SK-N-SH (cell line): ENCODE measurements at regions of chr15 and their contacts with region 1.

Region 1: DNA sequence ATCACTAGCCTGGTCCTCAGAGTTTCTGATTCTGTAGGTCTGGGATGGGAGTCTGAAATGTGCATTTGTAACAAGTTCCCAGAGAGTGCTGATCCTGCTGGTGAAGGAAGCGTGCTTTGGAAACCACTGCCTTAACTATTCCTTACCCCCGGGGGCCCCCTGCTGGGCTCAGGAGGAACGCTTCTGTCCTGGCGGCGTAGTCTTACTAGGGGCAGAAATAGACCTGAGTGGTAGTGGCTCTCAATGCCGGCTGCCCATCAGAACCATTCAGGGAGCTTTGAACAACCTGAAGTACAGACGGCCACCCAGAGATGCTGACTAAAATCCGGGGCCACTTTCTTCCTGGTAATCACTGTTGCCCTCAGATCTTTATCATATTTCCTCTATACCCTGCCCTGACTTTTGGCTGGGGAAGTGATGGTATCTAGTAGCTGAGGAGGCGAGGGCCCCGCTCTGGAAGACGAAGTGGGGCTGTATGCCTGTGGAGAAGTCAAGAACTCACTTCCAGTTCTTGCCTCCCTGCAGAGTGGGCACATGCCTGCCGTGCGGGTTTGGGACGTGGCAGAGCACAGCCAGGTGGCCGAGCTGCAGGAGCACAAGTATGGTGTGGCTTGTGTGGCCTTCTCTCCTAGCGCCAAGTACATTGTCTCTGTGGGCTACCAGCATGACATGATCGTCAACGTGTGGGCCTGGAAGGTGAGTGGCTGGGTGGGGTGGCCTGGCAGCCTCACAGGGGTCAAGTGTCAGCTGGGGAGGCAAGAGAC is 16.3 kb upstream of the JMJD7 start:
- DNase-seq: peak; percentile 89
- H3K4me3 ChIP-seq: no peak overlapping the region; a peak in 1 of 4 replicates
- H3K27ac ChIP-seq: no peak overlapping the region
- H3K4me1 ChIP-seq: peaks cover 0 to 2% of the 10 kb centered on the region in 2 experiments; a peak in 1 of 4 replicates
- H3K27me3 ChIP-seq: no peaks in the 10 kb centered on the region
- CTCF ChIP-seq: peak; percentile 92
- EP300 ChIP-seq: no peak
- RAD21 ChIP-seq: peak; percentile 98

Region 2: DNA sequence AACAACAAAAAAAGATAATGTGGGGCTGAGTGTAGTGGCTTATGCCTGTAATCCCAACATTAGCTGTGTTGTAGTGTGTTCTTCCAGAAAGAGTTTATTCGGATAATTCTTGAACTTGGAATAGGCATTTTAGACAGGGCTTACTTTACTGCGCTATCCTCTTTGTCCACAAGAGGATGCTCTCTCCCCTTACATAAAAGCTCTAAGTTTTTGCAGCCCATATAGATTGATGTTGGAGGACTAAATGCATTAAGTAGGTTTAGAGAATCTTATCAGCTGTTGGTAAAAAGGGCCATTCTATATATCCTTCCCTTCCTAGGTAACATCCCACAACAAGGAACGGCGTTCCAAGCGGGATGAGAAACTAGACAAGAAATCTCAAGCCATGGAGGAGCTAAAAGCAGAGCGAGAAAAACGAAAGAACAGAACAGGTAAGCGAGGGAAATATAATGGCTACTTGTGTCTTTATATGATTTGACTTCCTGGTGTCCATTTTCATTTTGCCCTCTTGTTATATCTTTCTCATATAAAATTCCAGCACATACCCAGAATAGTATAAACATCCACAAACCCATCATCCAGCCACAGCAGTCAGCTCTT is 345.7 kb before region 1 on chr15:
- CTCF ChIA-PET with region 1: interaction called, 33 read pairs
- POLR2A ChIA-PET with region 1: no interaction called
- DNase-seq: peak; percentile 62
- H3K4me3 ChIP-seq: no peak overlapping the region
- H3K27ac ChIP-seq: no peak overlapping the region
- H3K4me1 ChIP-seq: no peaks in the 10 kb centered on the region
- H3K27me3 ChIP-seq: no peaks in the 10 kb centered on the region
- CTCF ChIP-seq: peak; percentile 97
- EP300 ChIP-seq: no peak
- RAD21 ChIP-seq: peak; percentile 92

Region 3: GRCh38 chr15:41597787-41598186 is 213.8 kb before region 1 on chr15:
- CTCF ChIA-PET with region 1: interaction called, 47 read pairs
- POLR2A ChIA-PET with region 1: no interaction called
- DNase-seq: no peak
- H3K4me3 ChIP-seq: no peak overlapping the region
- H3K27ac ChIP-seq: no peak overlapping the region
- H3K4me1 ChIP-seq: no peaks in the 10 kb centered on the region
- H3K27me3 ChIP-seq: no peaks in the 10 kb centered on the region; the same call in 1 of the 2 replicates
- CTCF ChIP-seq: no peak
- EP300 ChIP-seq: no peak
- RAD21 ChIP-seq: no peak

Region 4: DNA sequence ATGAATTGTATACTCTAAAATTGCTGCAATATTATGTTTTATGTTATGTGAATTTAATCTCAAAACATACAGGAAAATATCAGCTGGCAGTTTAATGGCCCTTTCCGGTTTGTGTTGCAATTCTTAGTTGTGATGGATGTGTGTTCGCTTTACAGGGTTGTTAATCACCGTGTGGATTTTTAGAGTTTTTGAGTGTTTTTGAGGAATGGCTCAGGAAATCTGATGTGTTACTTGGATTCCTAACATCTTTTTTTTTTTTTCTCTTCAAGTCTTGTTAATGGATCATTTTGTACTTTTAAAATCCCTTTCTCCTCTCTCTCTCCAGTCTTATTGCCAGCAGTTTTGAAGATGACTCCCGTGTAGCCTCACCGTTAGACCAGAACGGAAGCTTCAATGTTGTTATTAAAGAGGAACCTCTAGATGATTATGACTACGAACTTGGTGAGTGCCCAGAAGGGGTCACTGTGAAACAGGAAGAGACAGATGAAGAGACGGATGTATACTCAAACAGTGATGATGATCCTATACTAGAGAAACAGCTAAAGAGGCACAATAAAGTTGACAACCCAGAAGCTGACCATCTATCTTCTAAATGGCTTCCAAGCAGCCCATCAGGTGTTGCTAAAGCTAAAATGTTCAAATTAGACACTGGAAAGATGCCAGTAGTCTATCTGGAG is 115.7 kb before region 1 on chr15:
- CTCF ChIA-PET with region 1: interaction called, 20 read pairs
- POLR2A ChIA-PET with region 1: no interaction called
- DNase-seq: peak; percentile 48
- H3K4me3 ChIP-seq: no peak overlapping the region
- H3K27ac ChIP-seq: no peak overlapping the region
- H3K4me1 ChIP-seq: no peaks in the 10 kb centered on the region; a peak in 2 of 4 replicates
- H3K27me3 ChIP-seq: no peaks in the 10 kb centered on the region
- CTCF ChIP-seq: peak; percentile 52
- EP300 ChIP-seq: no peak
- RAD21 ChIP-seq: peak; percentile 57

Region 5: GRCh38 chr15:41795996-41796856 is 15.4 kb before region 1 on chr15:
- CTCF ChIA-PET with region 1: interaction called, 36 read pairs
- POLR2A ChIA-PET with region 1: no interaction called
- DNase-seq: peak; percentile 42
- H3K4me3 ChIP-seq: 0 out of 4 replicates have a peak overlapping the region, but pooled peaks of 1 of the 2 experiments have one; percentile 14
- H3K27ac ChIP-seq: peak overlapping the region; percentile 74 to 77
- H3K4me1 ChIP-seq: peaks cover 23 to 35% of the 10 kb centered on the region in 2 experiments
- H3K27me3 ChIP-seq: no peaks in the 10 kb centered on the region
- CTCF ChIP-seq: no peak
- EP300 ChIP-seq: no peak
- RAD21 ChIP-seq: no peak